Thyroid gland (tissue), 4 donors: ENCODE measurements at regions of chr16 and their contacts with region 1.

Region 1: DNA sequence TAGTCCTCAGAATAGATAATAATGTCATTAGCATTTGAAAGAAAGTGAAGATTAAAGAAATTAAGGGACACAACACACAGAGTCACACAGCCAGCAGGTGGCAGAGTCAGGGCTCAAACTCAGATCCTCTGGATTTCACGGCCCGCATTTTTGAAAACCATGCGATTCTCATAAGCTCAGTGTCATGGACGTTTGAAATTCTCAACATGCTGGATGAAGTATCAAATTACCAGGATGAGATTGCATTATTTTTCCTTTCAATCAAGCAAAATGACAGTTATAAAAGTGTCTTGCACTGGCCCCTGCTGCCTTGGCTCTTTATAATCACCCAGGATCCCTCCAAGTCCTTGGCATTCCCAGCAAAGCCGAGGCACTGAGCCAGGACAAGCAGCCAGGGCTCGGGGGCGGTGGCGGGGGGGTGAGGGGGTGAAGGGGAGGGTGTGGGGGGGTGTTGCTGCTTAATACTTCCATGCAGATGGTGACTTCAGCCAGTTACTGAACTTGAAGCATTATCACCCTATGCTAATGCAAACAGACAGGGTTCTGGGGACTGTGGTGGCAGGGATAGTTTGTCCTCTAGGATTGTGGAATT is 6.6 kb upstream of the BMERB1 start:
- DNase-seq: peak; percentile 70 to 82
- H3K4me3 ChIP-seq: no peak overlapping the region
- H3K27ac ChIP-seq: peak overlapping the region in 1 of 3 donors; percentile 56
- H3K4me1 ChIP-seq: no peaks in the 10 kb centered on the region
- H3K27me3 ChIP-seq: no peaks in the 10 kb centered on the region
- CTCF ChIP-seq: peak in 5 of 6 experiments; percentile 21 to 65 (median 38)
- POLR2A ChIP-seq: no peak

Region 2: GRCh38 chr16:15457958-15458357 is 30.2 kb after region 1 on chr16:
- intact Hi-C with region 1: no loop called
- DNase-seq: no peak
- H3K4me3 ChIP-seq: no peak overlapping the region
- H3K27ac ChIP-seq: no peak overlapping the region
- H3K4me1 ChIP-seq: no peaks in the 10 kb centered on the region
- H3K27me3 ChIP-seq: no peaks in the 10 kb centered on the region
- CTCF ChIP-seq: no peak
- POLR2A ChIP-seq: no peak

Region 3: DNA sequence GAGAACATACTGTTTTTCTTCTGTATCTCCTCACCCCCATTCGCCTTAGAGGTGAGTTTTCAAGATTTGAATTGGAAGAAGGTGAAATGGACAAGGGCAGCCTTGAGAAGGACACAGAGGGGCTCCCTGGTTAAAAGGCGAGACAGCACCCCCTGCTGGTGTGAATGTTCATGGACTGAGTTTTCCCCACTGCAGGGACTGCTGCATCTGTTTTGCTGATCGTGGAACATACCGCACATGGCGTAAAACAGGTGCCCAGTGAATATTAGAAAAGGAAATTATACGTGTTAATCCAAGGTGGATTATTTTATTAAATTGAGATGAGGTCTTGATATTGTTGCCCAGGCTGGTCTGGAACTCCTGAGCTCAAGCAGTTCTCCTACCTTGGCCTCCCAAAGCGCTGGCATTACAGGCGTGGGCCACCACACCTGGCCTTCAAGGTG is 276.8 kb after region 1 on chr16:
- intact Hi-C with region 1: loop called (anchors 10 kb)
- DNase-seq: peak; percentile 60 to 74
- H3K4me3 ChIP-seq: no peak overlapping the region
- H3K27ac ChIP-seq: no peak overlapping the region
- H3K4me1 ChIP-seq: no peaks in the 10 kb centered on the region
- H3K27me3 ChIP-seq: no peaks in the 10 kb centered on the region
- CTCF ChIP-seq: peak; percentile 25 to 64 (median 40)
- POLR2A ChIP-seq: no peak